ENCODE measurements at regions of chr17 and their contacts with region 1.

Region 1: DNA sequence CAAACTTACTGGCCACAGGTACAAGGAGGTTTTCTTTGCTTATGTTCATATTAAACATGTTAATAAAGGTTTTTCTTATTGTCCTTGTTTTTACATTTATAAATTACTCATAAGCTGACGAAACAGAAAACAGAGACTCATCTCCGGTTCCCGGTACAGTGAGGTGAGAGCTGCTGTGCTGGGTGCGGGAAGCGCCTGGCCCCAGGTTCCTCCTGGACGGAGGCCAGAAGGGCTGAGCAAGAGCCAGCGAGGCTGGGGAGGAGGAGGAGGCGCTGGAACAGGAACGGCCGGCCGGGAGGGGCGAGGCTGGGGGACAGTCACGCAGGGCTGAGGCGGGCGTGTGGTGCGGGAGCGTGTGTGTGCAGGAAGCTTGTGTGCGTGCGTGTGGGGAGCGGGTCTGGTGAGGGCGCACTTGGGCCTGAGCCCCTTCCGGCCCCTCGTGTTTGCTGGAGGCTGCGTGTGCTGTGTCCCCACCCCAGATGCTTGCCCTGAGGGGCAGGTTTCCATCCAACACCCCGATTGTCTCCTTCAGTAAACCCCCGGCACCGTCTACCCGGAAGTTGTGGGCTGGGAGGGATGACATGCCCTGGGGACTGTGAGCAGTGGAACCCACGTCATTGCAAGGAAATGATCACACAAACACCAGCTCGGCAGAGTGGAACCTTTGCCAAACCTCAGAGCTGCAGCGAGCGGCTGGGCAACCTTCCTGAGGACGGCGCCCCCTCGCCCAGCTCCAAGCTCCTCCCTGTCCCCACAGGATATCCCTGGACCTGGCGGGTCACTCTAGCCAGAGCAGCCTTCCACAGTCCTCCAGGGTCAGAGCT is 19.5 kb downstream of the CD7 start:
- DNase-seq: peak; percentile 96
- ATAC-seq: peak; percentile 66
- H3K4me3 Mint-ChIP-seq: peak overlapping the region; percentile 88
- H3K27ac Mint-ChIP-seq: peak overlapping the region; percentile 100
- H3K4me1 Mint-ChIP-seq: peaks cover 87% of the 10 kb centered on the region
- H3K27me3 Mint-ChIP-seq: no peaks in the 10 kb centered on the region

Region 2: GRCh38 chr17:82145550-82146190 is 152.3 kb before region 1 on chr17:
- CTCF ChIA-PET with region 1: no interaction called
- POLR2A ChIA-PET with region 1: no interaction called
- DNase-seq: no peak
- ATAC-seq: no peak
- H3K4me3 Mint-ChIP-seq: no peak overlapping the region
- H3K27ac Mint-ChIP-seq: no peak overlapping the region
- H3K4me1 Mint-ChIP-seq: no peaks in the 10 kb centered on the region
- H3K27me3 Mint-ChIP-seq: no peaks in the 10 kb centered on the region

Region 3: GRCh38 chr17:82205719-82206508 is 92.0 kb before region 1 on chr17:
- CTCF ChIA-PET with region 1: interaction called, 6 read pairs
- POLR2A ChIA-PET with region 1: interaction called, 13 read pairs
- DNase-seq: peak; percentile 90
- ATAC-seq: peak; percentile 76
- H3K4me3 Mint-ChIP-seq: peak overlapping the region; percentile 62
- H3K27ac Mint-ChIP-seq: peak overlapping the region; percentile 96
- H3K4me1 Mint-ChIP-seq: peaks cover 67% of the 10 kb centered on the region
- H3K27me3 Mint-ChIP-seq: no peaks in the 10 kb centered on the region

Region 4: DNA sequence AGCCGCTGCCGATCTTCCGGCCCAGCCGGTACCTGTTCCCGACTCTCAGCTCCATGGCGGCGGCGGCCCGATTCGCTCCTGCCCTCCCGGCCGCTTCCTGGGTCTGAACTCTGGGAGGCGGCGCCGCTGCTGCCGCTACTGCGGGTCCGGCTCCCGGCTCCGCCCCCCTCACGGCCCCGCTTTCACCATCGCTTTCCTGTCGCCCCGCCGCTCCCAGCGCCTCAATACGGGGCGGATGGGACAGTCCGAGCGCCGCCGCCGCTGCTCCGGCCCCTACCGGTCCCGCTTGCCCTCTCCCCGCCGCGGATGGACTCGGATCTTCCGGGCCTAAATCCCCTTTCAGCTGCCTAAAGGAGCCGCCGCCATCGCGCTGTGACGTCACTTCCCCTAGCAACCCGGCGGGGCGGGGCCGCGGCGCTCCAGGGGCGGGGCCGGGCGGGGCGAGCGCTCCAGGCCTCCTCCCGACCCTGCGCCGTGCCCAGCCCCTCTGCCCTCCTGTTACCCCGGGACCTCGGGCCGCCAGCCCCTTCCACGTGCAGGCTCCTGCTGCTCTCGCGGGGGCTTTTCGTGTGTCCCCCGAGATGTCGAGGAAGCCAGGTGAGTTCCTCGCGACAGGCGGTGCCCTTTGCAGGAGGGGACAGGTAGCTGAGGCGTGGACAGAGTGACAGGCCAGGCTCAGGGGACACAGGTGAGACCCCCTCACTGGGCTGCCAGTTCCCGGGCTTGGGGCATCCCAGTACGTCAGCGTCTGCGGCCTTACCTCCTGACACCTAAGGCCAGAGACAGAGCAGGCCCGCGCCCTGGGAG is 24.4 kb before region 1 on chr17 and contains the start of gene CSNK1D:
- CTCF ChIA-PET with region 1: interaction called, 8 read pairs
- POLR2A ChIA-PET with region 1: interaction called, 26 read pairs
- DNase-seq: peak; percentile 93
- ATAC-seq: peak; percentile 85
- H3K4me3 Mint-ChIP-seq: peak within 1 kb of the TSS; percentile 86
- H3K27ac Mint-ChIP-seq: peak within 1 kb of the TSS; percentile 99
- H3K4me1 Mint-ChIP-seq: peaks cover 38% of the 10 kb centered on the region
- H3K27me3 Mint-ChIP-seq: peaks cover 1% of the 10 kb centered on the region
- total RNA-seq, gene CSNK1D: 99.5 to 111 TPM

Region 5: GRCh38 chr17:82315703-82316358 is 17.9 kb after region 1 on chr17:
- CTCF ChIA-PET with region 1: interaction called, 132 read pairs
- POLR2A ChIA-PET with region 1: interaction called, 50 read pairs
- DNase-seq: peak; percentile 70
- ATAC-seq: peak; percentile 37
- H3K4me3 Mint-ChIP-seq: peak overlapping the region; percentile 96
- H3K27ac Mint-ChIP-seq: peak overlapping the region; percentile 91
- H3K4me1 Mint-ChIP-seq: peaks cover 27% of the 10 kb centered on the region
- H3K27me3 Mint-ChIP-seq: no peaks in the 10 kb centered on the region

Region 6: DNA sequence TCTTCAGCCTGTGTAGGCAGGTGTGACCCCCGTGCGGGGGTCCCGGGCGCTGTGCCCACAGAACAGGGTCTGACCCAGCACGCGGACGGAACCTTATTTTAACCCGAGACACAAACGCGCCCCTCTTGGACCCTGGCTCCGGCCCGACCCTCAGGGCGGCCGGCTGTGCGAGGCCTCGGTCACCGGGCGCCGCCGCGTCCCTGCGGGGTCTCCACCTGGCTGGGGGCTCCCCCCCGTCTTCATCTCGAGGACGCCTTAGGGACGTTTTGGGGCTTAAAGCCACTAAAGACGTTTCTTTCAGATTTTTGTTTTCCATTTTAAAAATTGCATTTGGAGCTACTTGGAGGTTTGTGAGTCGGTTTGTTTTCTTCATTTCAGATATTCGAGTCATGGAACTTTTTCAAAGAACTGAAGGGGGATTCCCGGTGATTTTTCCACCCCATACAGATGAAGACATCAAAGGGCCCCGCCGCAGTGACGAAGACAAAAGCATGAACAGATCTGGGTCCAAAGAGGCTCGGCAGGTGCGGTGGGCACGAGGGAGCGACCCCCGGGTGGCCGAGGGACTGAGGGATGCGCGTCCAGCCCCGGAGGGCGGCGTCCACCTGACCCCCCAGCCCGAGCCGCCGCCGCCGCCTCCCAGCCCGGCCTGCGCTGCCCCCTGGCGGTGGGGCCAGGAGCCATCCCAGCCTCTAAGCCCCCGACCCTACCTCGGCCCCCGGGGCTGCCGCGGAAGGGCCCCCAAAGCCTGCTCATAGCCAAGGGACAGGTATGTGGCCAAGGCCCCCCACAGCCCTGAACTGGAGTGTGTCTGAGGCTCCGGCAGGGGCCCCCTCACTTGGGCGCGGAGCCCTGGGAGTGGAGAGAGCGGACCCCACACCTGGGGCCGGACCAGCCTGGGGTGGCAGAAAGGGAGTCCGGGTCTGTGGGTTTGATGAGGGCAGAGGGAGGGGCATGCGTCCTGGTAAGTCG is 23.3 kb after region 1 on chr17:
- CTCF ChIA-PET with region 1: interaction called, 132 read pairs
- POLR2A ChIA-PET with region 1: interaction called, 50 read pairs
- DNase-seq: peak; percentile 68
- ATAC-seq: peak; percentile 31
- H3K4me3 Mint-ChIP-seq: peak overlapping the region; percentile 64
- H3K27ac Mint-ChIP-seq: peak overlapping the region; percentile 77
- H3K4me1 Mint-ChIP-seq: peaks cover 28% of the 10 kb centered on the region
- H3K27me3 Mint-ChIP-seq: no peaks in the 10 kb centered on the region

Region 7: GRCh38 chr17:82332669-82333278 is 34.8 kb after region 1 on chr17:
- CTCF ChIA-PET with region 1: interaction called, 10 read pairs
- POLR2A ChIA-PET with region 1: interaction called, 7 read pairs
- DNase-seq: peak; percentile 42
- ATAC-seq: peak; percentile 37
- H3K4me3 Mint-ChIP-seq: peak overlapping the region; percentile 66
- H3K27ac Mint-ChIP-seq: peak overlapping the region; percentile 43
- H3K4me1 Mint-ChIP-seq: peaks cover 31% of the 10 kb centered on the region
- H3K27me3 Mint-ChIP-seq: peaks cover 7% of the 10 kb centered on the region

Measured in activated CD8-positive, alpha-beta T cell treated with anti-CD3 and anti-CD28 coated beads, Interleukin-2, amount 10 ng/mL, durations not matched to agents 7 days and 5 days (primary cell).